ENCODE measurements at regions of chr5 and their contacts with region 1.

Region 1: DNA sequence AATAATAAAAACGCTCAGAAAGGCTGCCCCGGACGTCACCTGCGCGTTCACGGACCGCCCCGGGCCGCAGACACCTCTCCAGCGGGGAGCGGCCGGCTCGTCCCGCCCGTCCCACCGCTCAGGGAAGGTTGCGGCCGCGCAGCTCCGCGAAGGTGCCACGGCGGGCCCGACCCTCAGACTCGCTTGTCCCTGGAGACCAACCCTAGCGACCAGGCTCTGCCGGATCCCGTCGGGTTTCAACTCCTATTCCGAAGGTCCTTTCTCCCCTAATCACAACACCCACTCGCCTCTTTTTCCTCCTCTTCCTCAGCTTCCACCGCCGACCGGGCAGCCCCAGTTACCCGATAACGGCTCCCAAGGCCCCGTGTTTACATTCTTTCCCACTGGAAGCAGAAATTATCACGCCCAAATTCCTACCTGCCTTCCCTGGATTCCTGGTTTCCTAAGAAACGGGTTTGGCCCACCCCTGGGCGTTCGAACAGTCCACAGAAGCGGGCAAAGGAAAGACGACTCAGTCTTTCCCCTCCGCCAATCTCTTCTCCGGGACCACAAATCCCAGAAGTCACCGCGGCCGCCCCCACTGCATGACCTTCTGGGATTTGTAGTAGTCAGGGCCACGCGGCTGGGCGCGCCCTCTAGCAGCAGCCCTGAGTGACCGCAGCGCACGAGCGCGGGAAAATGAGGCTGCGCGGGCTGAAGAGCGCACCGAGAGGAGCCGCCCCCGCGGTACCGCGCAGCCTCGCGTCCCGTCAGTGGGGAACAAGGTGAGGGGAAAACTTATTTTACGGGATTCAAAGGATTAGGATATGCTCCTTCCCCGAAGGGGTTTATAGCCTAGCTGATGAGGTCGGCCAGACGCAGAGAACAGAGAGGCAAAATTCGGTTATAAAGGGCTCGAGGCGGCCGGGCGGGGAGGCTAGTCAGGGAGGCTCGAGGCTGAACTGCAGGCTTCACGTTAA is at the start of gene TTC33:
- DNase-seq: peak; percentile 96 to 97
- ATAC-seq: peak; percentile 95
- total RNA-seq, gene TTC33: 15.0 to 15.8 TPM

Region 2: DNA sequence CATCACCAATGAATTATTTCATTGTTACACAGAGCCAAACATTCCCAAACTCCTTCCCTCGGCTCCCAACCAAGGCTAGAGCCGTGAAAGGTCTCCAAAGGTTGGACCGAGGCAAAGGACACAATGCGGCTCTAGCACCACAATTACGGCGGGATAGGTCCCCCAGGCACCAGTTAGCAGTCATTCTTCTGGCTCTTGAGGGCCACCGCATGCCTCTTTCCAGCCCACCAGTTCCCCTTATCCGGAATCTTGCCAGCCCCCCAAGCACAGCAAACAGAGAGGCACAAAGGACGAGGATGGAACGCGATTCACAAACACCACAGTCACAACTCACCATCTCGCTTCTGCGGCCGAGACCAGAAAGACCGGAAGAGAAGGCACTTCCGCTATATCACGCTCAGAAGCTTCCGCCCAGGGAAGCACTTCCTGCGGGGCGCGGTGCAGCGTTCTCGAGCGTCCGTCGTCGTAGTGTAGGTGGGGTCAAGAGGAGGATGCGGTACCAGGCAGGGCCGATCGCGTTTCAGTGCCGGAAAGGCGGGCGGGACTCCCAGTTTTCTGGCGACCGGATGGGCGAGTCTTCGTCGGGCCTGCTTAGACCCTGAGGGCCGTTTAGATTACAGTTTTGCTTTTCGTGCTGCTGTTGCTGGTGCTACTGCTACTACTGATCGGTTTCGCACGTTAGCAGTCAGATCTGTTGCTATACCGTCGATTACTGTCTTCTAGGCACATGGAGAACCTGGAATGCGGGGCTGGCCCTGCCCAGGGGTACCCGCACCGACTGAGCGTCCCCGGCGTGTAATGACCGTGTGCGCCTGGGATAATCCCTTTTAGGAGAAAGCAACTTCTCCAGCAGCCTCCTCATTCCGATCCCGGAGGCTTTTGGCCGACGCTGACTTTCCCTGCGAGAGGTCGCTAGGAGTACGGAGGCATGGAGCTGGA is 79.4 kb after region 1 on chr5 and contains the start of gene RPL37:
- intact Hi-C with region 1: loop called in 1 of 2 experiments (anchors 5 kb)
- DNase-seq: peak; percentile 95 to 97
- ATAC-seq: peak; percentile 99
- total RNA-seq, gene RPL37: 828 to 833 TPM

Region 3: DNA sequence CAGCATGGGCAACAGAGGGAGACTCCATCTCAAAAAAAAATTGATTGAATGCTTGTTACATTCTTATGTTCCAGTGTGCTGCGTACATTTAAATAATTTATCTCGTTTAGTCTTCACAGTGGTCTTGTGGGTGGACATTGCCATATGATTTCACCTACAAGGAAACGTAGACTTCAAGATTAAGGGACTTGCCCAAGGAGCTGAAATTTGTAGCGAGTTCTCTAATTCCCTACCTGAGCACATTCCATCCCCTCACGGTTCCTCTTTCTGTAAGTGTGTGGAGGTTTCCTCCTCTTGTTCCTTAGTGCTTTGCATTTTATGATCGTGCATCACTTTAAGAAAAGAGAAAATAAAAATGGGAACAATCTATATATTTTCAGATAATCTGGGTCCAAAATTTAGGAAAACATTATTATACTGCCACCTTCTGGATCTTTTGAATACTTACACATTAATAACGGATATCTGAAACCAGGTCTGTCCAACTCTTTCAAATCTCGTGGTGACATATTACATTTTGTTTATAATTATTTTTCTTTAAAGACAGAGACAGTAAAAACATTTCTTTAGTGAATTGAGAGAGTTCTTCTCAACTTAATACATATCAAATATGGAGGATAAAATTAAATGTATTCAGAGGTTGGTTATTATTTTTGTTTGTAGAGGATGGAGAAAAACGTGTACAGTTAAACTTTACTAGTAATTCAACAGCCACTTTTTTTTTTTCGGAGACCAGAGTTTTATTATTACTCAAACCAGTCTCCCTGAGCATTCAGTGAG is 123.7 kb after region 1 on chr5:
- intact Hi-C with region 1: loop called in 1 of 2 experiments (anchors 10 kb)
- DNase-seq: no peak
- ATAC-seq: no peak